ENCODE measurements at regions of chr6 and their contacts with region 1.

Region 1: DNA sequence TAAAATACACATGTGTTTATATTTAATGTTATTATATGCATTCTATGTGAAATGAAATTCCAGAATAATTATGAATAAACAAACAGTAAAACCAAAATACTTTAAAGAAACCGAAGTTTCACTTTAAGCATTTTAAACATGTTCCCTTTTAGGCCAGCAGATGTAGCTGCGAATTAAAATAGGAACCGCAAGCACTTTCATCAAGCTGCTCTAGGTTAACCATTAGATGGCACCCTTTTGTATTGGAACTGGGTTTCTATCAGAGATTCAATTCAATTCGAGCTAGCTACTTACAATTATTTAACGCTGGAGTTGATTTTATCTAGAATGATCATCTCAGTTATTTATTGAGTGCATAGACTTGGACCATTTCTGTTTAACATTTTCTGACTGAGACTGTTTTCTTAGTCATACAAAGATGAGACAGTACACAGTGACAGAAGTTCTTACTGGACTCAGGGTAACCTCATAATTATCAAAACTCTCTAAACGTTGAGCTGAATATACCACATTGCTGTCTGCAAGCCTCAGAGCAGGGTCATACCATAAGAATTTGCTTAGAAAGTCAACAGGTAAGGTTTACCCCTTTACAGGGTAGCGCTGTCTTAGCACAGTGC is 8.5 kb downstream of the TMEM242 start:
- DNase-seq: no peak
- ATAC-seq: peak; percentile 72

Region 2: DNA sequence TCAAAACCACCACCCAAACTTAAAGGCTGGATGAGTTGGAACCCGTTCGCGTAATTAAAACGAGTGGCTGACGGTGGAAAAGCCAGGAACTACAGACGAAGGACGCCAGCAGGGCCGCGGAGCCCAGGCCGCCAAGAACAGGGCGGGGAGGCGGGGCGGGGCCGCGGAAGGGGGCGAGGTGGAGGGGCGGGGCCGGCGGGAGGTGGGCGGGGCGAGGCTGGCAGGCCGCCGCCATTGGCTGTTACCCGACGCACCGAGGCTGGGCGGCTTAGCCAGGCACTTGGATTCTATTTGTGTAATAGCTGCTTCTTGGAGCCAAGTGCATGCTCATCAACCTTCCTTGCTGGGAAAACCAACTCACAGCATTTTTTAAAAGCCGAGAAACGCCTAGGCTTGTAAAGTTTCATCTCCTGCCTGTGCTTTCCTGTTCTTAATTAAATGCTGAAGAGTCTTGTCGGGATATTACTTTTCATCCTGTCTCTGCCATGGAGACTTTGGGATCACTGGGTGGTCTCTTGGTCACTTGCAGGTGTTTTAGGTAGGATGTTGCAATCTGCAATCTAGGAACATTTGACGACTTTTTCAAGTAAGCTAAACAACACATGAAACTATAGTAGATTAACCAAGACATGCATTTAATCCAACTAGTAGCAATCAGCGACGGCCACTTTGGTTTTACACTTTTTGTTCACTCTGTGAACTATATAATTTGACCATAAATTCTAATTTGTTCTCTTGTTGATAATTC is 292.6 kb before region 1 on chr6:
- intact Hi-C with region 1: no loop called
- DNase-seq: peak; percentile 92
- ATAC-seq: peak; percentile 94

Region 3: DNA sequence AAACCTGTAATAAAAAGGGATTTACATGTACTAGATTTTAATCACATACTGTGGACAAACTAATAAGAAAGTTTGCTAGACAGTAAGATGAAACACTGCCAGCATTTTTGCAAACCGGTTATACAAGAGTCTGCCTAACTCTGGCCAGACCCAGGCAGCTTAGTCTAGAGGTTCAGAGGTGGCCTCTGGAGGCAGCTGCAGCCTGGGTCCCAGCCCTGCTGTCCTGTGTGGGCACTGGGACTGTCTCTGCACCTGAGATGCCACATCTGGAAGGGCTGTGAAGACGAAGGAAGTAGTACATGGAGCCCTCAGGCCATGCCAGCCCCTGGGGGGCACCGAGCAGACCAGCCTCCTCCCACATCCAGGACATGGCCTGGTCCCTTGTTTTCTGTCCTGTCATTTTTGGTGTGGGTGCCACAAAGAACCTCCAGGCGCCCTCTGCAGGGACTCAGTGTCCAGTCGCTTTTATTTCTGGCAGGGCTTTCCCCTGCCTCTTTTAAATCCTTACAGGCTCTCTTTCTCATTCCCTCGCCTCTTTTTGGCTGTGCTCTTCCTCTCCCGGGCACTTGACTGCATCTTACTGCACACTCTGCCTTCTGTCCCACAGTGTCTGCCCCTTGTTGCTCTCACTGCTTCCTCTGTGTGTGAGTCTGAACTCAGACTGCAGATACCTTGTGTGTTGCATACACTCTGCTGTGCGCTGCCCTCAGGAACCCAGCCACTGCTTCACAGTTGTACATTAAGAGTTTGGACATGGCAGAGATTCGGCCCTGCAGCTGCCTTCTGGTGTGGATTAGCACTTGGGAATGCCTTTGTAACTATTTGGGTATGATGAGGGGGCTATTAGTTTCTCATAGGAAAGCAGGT is 282.9 kb after region 1 on chr6:
- intact Hi-C with region 1: loop called (anchors 10 kb)
- DNase-seq: peak; percentile 60
- ATAC-seq: peak; percentile 70

Region 4: DNA sequence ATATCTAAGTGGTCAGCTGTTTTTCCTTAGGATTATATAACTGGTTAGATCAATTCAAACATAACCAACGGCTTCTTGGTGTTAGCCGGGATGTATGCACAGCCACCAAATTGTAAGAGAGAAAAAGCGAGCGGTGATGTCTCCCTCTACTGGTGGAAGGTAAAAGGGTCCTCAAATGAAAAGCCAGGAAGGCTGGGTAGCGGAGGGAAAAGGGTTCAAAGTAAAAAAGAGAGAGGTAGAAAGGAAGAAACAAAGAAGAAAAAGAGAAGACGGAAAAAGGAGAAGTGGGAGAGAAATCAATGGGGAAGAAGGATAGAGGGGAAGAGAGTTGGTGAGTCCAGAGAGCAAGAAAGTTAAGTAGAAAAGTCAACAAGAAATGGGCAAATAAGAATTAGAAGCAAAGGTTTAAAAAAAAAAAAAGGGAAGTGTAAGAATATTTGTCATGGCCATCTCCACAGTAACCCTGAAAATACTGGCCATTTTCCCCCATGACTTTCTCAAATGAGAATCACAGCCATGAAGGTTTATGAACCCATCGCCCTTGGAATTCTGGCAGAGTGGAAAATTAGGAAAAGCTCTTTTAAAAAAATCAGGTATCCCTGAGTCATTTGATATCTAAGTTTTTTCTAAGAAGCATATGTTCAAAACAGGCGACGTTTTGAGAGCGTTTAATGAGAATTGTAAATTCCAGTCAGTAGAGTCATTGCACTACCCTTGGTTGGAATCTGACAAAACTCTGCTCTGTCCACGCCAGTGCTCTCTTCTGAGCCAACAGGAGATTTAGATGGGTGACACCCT is 352.6 kb after region 1 on chr6:
- intact Hi-C with region 1: loop called (anchors 5 kb)
- DNase-seq: no peak
- ATAC-seq: peak; percentile 55